MCF 10A (cell line): ENCODE measurements at regions of chr6 and their contacts with region 1.

Region 1: GRCh38 chr6:119110601-119111548 is 32.4 kb upstream of the FAM184A start:
- DNase-seq: peak; percentile 68
- H3K4me3 Mint-ChIP-seq: no peak overlapping the region
- H3K27ac Mint-ChIP-seq: no peak overlapping the region
- H3K4me1 Mint-ChIP-seq: no peaks in the 10 kb centered on the region
- H3K27me3 Mint-ChIP-seq: no peaks in the 10 kb centered on the region
- CTCF ChIP-seq: peak; percentile 56

Region 2: GRCh38 chr6:118963003-118963402 is 147.9 kb before region 1 on chr6:
- CTCF ChIA-PET with region 1: interaction called, 420 read pairs
- POLR2A ChIA-PET with region 1: interaction called, 16 read pairs
- intact Hi-C with region 1: loop called (anchors 1 kb)
- DNase-seq: peak; percentile 12
- H3K4me3 Mint-ChIP-seq: no peak overlapping the region
- H3K27ac Mint-ChIP-seq: no peak overlapping the region
- H3K4me1 Mint-ChIP-seq: no peaks in the 10 kb centered on the region
- H3K27me3 Mint-ChIP-seq: no peaks in the 10 kb centered on the region
- CTCF ChIP-seq: no peak

Region 3: GRCh38 chr6:118974790-118975189 is 136.1 kb before region 1 on chr6:
- CTCF ChIA-PET with region 1: interaction called, 420 read pairs
- POLR2A ChIA-PET with region 1: interaction called, 5 read pairs
- intact Hi-C with region 1: no loop called
- DNase-seq: no peak
- H3K4me3 Mint-ChIP-seq: no peak overlapping the region
- H3K27ac Mint-ChIP-seq: no peak overlapping the region
- H3K4me1 Mint-ChIP-seq: peaks cover under 1% of the 10 kb centered on the region
- H3K27me3 Mint-ChIP-seq: no peaks in the 10 kb centered on the region
- CTCF ChIP-seq: no peak

Region 4: GRCh38 chr6:119096721-119097565 is 13.9 kb before region 1 on chr6:
- CTCF ChIA-PET with region 1: interaction called, 39 read pairs
- POLR2A ChIA-PET with region 1: interaction called, 9 read pairs
- intact Hi-C with region 1: no loop called
- DNase-seq: peak; percentile 86
- H3K4me3 Mint-ChIP-seq: no peak overlapping the region
- H3K27ac Mint-ChIP-seq: peak overlapping the region; percentile 72
- H3K4me1 Mint-ChIP-seq: peaks cover 7% of the 10 kb centered on the region
- H3K27me3 Mint-ChIP-seq: no peaks in the 10 kb centered on the region
- CTCF ChIP-seq: no peak

Region 5: GRCh38 chr6:119129148-119129967 is 18.5 kb after region 1 on chr6:
- CTCF ChIA-PET with region 1: interaction called, 15 read pairs
- POLR2A ChIA-PET with region 1: no interaction called
- intact Hi-C with region 1: no loop called
- DNase-seq: peak; percentile 81
- H3K4me3 Mint-ChIP-seq: no peak overlapping the region
- H3K27ac Mint-ChIP-seq: peak overlapping the region; percentile 66
- H3K4me1 Mint-ChIP-seq: peaks cover 21% of the 10 kb centered on the region
- H3K27me3 Mint-ChIP-seq: no peaks in the 10 kb centered on the region
- CTCF ChIP-seq: peak; percentile 72

Region 6: GRCh38 chr6:119182875-119183274 is 72.0 kb after region 1 on chr6:
- CTCF ChIA-PET with region 1: no interaction called
- POLR2A ChIA-PET with region 1: no interaction called
- intact Hi-C with region 1: no loop called
- DNase-seq: no peak
- H3K4me3 Mint-ChIP-seq: no peak overlapping the region
- H3K27ac Mint-ChIP-seq: no peak overlapping the region
- H3K4me1 Mint-ChIP-seq: no peaks in the 10 kb centered on the region
- H3K27me3 Mint-ChIP-seq: no peaks in the 10 kb centered on the region
- CTCF ChIP-seq: no peak